Posterior vena cava (tissue), 2 donors: ENCODE measurements at regions of chr17 and their contacts with region 1.

Region 1: DNA sequence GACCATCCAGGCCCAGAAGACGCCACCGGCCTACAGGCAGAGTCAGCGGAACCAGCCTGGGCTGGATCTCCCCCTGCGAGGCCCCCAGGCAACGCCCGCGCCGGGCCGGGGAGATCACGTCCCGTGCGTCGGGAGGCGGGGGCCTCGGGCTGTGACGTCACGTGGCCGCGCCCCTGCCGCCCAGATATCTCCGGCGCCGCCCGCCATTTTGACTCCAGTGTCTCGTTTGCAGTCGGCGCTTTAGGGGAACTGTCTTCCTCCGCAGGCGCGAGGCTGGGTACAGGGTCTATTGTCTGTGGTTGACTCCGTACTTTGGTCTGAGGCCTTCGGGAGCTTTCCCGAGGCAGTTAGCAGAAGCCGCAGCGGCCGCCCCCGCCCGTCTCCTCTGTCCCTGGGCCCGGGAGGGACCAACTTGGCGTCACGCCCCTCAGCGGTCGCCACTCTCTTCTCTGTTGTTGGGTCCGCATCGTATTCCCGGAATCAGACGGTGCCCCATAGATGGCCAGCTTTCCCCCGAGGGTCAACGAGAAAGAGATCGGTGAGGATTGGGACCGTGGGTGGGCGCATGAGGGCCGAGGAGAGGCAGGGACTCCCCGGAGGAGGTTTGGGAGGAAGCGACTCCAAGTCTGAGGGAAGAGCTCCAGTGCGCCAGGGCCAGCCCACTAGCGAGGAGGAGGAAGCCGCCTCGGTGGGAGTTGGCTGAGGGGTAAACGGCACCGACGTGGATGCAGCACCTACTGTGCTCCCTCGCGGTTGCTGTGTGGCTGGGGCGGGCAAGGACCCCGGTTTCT is at the start of gene WSB1:
- DNase-seq: peak; percentile 99
- total RNA-seq, gene WSB1: 206 to 227 TPM

Region 2: DNA sequence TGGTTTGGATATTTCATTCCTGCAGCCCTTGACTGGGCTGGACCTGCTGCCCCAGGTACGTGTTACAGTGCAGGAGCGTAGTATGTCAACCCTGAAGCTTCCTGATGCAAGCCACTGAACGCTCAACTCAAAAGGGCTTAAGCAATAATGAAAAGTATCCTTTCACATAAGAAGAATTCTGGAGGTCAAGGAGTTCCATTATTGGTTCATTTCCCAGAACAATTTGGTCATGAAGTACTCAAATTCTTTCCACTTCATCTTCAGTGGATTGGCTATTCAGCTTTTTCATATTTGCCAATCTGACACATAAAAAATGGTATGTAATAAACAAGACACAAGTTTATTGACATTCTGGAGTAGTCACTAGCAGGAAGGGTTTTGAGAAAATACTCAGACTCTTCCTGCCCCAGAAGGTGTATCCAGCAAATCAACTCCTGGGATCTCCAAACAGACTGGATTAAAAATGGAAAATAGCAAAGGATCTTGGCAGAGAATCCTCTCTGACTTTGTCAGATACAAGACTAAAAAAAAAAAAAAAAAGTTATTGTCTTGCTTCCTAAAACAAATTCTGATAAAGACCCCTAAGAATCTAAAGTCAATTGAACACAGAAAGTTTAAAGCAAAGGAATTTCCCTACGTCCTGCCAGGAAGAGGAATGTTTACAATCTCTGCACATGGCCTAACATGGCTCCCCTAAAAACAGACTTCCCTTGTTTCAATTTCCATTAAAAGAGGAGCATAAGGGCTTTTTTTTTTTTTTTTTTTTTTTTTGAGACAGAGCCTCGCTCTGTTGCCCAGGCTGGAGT is 37.7 kb before region 1 on chr17:
- intact Hi-C with region 1: loop called in 1 of 2 experiments (anchors 5 kb)
- DNase-seq: no peak

Region 3: DNA sequence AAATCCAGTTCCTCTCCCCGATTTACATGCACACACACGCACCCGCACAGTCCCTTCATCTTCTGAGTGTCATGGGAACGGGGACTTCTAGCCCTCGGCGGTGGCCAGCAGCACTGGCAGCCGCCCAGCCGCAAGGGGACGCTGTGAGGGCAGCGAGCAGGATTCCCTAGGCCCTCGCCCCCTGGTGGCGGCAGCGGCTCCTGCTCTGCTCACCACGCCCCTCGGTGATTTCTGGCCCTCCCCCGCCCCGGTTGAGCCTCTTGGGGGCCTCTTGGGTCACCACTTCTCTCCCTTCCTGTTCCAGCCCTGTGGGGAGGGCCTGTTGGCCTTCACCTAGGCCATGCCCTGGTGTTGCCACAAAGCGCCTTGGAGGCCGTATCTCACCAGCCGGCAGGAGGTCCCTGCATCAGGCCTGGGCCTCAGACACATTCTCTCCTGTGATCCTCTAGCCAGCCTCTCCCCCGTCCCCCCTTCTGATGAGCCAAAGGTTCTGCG is 87.0 kb after region 1 on chr17:
- intact Hi-C with region 1: no loop called
- DNase-seq: peak; percentile 92